ENCODE measurements at regions of chr17 and their contacts with region 1.

Region 1: GRCh38 chr17:76557368-76558197 is 17.7 kb downstream of the PRCD start:
- DNase-seq: peak; percentile 93
- H3K4me3 Mint-ChIP-seq: peak overlapping the region; percentile 95
- H3K27ac Mint-ChIP-seq: peak overlapping the region; percentile 98
- H3K4me1 Mint-ChIP-seq: peaks cover 33% of the 10 kb centered on the region
- H3K27me3 Mint-ChIP-seq: no peaks in the 10 kb centered on the region

Region 2: GRCh38 chr17:76452660-76453430 is 104.7 kb before region 1 on chr17 and contains the start of gene UBE2O:
- intact Hi-C with region 1: loop called (anchors 5 kb)
- DNase-seq: peak; percentile 93
- H3K4me3 Mint-ChIP-seq: peak within 1 kb of the TSS; percentile 85
- H3K27ac Mint-ChIP-seq: peak within 1 kb of the TSS; percentile 47
- H3K4me1 Mint-ChIP-seq: peaks cover 31% of the 10 kb centered on the region
- H3K27me3 Mint-ChIP-seq: peaks cover 4% of the 10 kb centered on the region
- total RNA-seq, gene UBE2O: 46.0 and 46.5 TPM in 2 replicates

Region 3: GRCh38 chr17:76714822-76715495 is 157.4 kb after region 1 on chr17:
- intact Hi-C with region 1: loop called (anchors 10 kb)
- DNase-seq: peak; percentile 53
- H3K4me3 Mint-ChIP-seq: no peak overlapping the region
- H3K27ac Mint-ChIP-seq: peak overlapping the region; percentile 15
- H3K4me1 Mint-ChIP-seq: peaks cover 32% of the 10 kb centered on the region
- H3K27me3 Mint-ChIP-seq: no peaks in the 10 kb centered on the region